ENCODE measurements at regions of chr2 and their contacts with region 1.

Region 1: GRCh38 chr2:164015328-164016123 is 279.7 kb upstream of the FIGN start:
- DNase-seq: no peak
- H3K4me3 ChIP-seq: no peak overlapping the region
- H3K27ac ChIP-seq: no peak overlapping the region
- H3K27me3 ChIP-seq: no peaks in the 10 kb centered on the region
- CTCF ChIP-seq: no peak

Region 2: DNA sequence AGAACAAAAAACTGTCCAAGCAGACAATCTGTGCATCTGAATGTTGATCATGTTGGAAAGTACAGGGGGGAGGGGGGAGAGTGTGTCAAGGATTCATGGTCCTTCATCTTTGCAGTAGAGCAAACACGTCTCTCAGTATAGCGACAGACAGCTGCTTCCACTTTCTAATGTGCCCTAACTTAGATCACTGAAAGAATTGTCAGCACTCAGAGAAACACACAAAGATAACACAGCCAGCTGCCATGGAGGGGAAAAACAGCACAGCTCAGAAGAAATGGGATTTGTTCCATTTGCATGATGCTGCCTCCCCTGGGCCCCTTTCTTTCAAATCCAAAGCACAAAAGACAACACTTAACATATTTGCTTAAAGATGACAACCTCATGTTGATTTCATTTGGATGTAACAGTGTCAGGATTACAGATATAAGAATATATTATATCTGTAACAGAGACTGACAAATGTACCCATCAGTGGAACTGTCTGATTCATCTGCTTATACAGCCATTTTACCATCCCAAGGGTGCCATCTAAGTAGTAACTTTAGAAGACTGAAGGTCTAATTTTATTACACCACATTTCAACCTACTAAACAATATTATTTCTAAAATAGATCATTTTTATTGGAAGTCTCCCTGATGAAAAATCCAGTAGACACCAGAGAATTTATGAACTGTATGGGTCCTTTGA is 297.4 kb before region 1 on chr2:
- intact Hi-C with region 1: loop called in 1 of 2 experiments (anchors 10 kb)
- DNase-seq: peak in 1 of 10 donors; percentile 46
- H3K4me3 ChIP-seq: peak overlapping the region in 51 of 59 donors; percentile 1 to 51 (median 31)
- H3K27ac ChIP-seq: peak overlapping the region; percentile 1 to 92 (median 83)
- H3K27me3 ChIP-seq: no peaks in the 10 kb centered on the region
- CTCF ChIP-seq: peak in 1 of 56 donors; percentile 16

Region 3: DNA sequence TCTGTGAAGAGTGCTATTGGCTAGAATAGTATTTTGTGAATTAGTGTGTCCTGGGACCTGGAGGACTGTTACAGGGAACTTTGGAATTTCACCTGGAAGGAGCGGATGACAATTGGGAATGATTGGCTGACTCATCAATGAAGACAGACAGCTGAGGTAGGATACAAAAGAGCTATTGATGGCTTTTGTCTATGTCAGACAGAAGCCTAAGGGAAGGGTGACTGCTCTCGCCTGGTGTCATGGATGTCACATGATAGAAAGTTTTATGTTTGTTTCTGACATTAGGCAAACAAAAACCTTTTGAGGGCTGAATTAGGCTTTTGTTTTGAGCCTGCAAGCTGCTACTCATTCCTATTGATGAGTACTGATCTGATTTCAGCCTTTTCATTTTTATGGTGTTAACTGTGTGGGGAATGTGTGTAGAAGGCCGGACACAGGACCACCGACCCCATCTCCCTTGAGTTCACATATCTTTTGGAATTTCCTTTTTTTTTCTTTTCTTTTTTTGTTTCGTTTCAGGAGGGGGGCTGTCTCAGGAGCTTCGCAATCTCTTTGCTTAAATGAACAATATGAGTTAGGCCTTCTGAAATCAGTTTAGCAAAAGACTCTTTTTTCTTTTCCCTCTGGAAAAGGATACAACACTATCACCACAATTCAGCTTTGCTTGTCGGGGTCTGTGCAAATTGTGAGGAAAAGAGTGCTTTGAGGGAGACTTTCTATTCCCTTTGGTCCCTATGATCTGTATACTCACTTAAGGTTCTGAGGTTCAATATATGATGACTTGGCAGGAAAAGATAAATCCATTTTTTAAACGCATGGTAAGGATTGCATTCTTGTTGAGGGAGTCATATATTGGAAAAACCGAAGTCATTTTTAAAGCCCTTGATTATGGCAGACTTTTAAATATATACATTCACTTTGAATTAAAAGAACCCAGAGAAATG is 71.9 kb before region 1 on chr2:
- intact Hi-C with region 1: loop called (anchors 2 to 5 kb)
- DNase-seq: peak in 2 of 10 donors; percentile 41 to 45
- H3K4me3 ChIP-seq: peak overlapping the region in 15 of 59 donors; percentile 0 to 48 (median 20)
- H3K27ac ChIP-seq: peak overlapping the region in 55 of 59 donors; percentile 51 to 94 (median 80)
- H3K27me3 ChIP-seq: no peaks in the 10 kb centered on the region
- CTCF ChIP-seq: no peak

Region 4: GRCh38 chr2:164055623-164056022 is 40.1 kb after region 1 on chr2:
- intact Hi-C with region 1: loop called in 1 of 2 experiments (anchors 5 kb)
- DNase-seq: no peak
- H3K4me3 ChIP-seq: no peak overlapping the region
- H3K27ac ChIP-seq: no peak overlapping the region
- H3K27me3 ChIP-seq: peaks cover 0 to 5% (median 0%) of the 10 kb centered on the region in 45 donors
- CTCF ChIP-seq: no peak

Measured in dorsolateral prefrontal cortex (tissue), 120 donors.